PC-9 (cell line): ENCODE measurements at regions of chr1 and their contacts with region 1.

Region 1: DNA sequence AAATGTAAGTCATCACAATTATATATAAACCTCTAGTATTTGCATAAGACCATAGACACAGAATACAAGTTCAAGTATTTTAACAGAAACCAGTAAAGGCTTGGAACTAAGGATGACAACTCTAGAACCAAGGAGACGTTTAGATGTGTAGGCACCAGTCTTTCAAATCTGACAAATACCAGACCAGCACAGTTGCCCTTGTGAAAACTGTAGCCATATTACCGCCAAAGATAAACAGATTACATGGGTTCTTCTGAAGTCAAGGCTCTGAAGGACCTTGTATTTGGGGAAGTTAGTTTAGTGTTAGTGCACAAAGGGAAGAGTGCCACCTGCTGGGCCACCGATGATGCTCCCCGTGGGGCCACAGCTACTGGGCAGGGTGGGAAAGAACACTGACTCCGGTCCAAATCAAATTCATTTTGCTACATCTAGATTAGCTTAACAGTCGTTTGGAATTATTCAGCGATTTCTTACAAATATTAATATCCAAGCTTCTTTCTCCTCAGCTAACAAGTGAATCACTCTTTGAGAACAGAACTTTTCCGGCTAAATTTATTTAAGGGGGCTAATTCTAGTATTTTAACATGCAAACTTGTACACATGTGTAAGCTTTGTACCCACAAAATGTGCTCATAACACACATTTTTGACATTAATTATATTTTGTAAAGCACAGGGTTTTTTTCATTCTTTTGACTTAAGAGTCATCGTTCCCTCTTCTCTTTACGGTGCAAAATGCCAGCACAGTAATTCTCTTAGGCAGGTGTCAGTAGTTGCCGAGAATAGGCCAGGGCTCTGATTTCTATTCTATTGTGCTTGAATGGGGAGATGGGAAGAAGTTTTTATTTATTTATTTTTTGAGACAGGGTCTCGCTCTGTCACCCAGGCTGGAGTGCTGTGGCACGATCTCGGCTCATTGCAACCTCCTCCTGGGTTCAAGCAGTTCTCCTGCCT is 8.0 kb upstream of the NIBAN1 start:
- DNase-seq: peak in 1 of 2 experiments; percentile 63
- H3K4me3 ChIP-seq: no peak overlapping the region
- H3K27ac ChIP-seq: no peak overlapping the region
- H3K4me1 ChIP-seq: no peaks in the 10 kb centered on the region
- H3K27me3 ChIP-seq: no peaks in the 10 kb centered on the region
- CTCF ChIP-seq: peak; percentile 92

Region 2: DNA sequence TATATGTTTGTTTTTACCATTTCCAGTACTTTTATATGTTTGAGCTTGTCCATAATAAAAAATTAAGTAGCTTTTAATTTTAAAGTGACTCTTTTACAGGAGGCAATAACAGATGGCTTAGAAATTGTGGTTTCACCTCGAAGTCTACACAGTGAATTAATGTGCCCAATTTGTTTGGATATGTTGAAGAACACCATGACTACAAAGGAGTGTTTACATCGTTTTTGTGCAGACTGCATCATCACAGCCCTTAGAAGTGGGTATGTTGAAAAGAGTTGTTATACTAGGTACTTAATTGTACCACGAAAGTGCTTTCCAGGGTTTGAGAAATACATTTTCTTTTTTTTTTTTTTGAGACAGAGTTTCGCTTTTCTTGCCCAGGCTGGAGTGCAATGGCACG is 109.2 kb after region 1 on chr1:
- CTCF ChIA-PET with region 1: no interaction called
- POLR2A ChIA-PET with region 1: no interaction called
- intact Hi-C with region 1: no loop called
- DNase-seq: no peak
- H3K4me3 ChIP-seq: no peak overlapping the region
- H3K27ac ChIP-seq: no peak overlapping the region
- H3K4me1 ChIP-seq: no peaks in the 10 kb centered on the region
- H3K27me3 ChIP-seq: no peaks in the 10 kb centered on the region
- CTCF ChIP-seq: no peak

Region 3: DNA sequence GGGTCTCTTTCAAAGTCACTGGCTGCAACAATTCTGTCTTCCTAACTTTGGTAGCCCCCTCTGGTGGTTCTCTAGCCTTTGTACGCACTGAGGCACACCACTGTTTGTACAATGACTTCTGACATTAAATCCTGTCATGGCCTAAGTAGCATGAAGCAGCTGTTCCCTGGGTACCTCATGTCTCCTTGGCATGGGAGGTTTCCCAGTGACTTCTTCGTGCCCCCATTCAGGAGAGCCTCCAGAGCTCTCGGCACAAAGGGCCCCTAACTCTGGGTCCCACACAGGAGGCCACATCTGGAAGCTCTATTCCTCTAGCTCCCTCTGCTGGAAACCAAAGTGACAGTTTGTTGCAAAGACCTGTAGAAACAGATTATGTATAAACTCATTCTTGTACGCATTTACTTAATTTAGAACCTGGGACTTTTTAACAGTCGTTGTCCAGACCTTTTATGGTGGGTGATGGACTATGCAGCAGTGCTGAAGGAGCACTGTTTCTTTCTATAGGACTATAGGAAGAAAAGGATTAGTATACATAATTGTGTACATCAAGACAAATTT is 188.1 kb after region 1 on chr1:
- CTCF ChIA-PET with region 1: interaction called, 4 read pairs
- POLR2A ChIA-PET with region 1: no interaction called
- intact Hi-C with region 1: loop called (anchors 1 kb)
- DNase-seq: peak in 1 of 2 experiments; percentile 30
- H3K4me3 ChIP-seq: no peak overlapping the region
- H3K27ac ChIP-seq: no peak overlapping the region
- H3K4me1 ChIP-seq: no peaks in the 10 kb centered on the region
- H3K27me3 ChIP-seq: no peaks in the 10 kb centered on the region
- CTCF ChIP-seq: peak; percentile 79

Region 4: DNA sequence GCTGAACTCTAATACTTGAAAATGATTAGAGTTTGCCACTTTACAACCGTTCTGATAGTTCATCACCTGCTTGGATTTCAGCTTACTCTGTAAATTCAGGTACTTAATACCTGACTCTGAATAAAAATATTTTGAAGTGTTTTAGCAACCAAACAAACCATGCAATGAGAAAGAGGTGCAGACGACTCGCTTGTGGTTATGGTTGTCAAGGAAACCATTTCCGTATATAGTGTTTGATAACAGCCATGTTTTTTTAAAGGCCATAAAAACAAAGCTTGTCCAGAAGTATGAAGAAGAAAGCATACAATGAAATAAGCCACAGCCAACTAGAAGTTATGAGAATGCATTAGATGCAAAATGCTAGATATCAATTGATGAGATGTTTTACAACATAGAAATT is 584.7 kb after region 1 on chr1:
- CTCF ChIA-PET with region 1: no interaction called
- POLR2A ChIA-PET with region 1: no interaction called
- intact Hi-C with region 1: no loop called
- DNase-seq: peak; percentile 25 to 69
- H3K4me3 ChIP-seq: no peak overlapping the region
- H3K27ac ChIP-seq: no peak overlapping the region
- H3K4me1 ChIP-seq: no peaks in the 10 kb centered on the region
- H3K27me3 ChIP-seq: no peaks in the 10 kb centered on the region
- CTCF ChIP-seq: no peak

Region 5: GRCh38 chr1:185686821-185687778 is 704.8 kb after region 1 on chr1:
- CTCF ChIA-PET with region 1: no interaction called
- POLR2A ChIA-PET with region 1: no interaction called
- intact Hi-C with region 1: loop called (anchors 5 kb)
- DNase-seq: no peak
- H3K4me3 ChIP-seq: no peak overlapping the region
- H3K27ac ChIP-seq: no peak overlapping the region
- H3K4me1 ChIP-seq: no peaks in the 10 kb centered on the region
- H3K27me3 ChIP-seq: no peaks in the 10 kb centered on the region
- CTCF ChIP-seq: no peak